IMR-90 (cell line): ENCODE measurements at regions of chr9 and their contacts with region 1.

Region 1: GRCh38 chr9:19799784-19800183 is 10.9 kb upstream of the SLC24A2 start:
- DNase-seq: no peak
- ATAC-seq: no peak
- H3K4me3 ChIP-seq: no peak overlapping the region
- H3K27ac ChIP-seq: no peak overlapping the region
- H3K4me1 ChIP-seq: no peaks in the 10 kb centered on the region
- H3K27me3 ChIP-seq: no peaks in the 10 kb centered on the region
- CTCF ChIP-seq: no peak
- POLR2A ChIP-seq: no peak
- RAD21 ChIP-seq: no peak

Region 2: GRCh38 chr9:19840953-19841352 is 41.2 kb after region 1 on chr9:
- CTCF ChIA-PET with region 1: no interaction called
- POLR2A ChIA-PET with region 1: no interaction called
- dilution Hi-C with region 1: no loop called
- in situ Hi-C with region 1: no loop called
- intact Hi-C with region 1: loop called (anchors 5 kb)
- DNase-seq: no peak
- ATAC-seq: no peak
- H3K4me3 ChIP-seq: no peak overlapping the region
- H3K27ac ChIP-seq: no peak overlapping the region
- H3K4me1 ChIP-seq: no peaks in the 10 kb centered on the region
- H3K27me3 ChIP-seq: no peaks in the 10 kb centered on the region
- CTCF ChIP-seq: no peak
- POLR2A ChIP-seq: no peak
- RAD21 ChIP-seq: no peak

Region 3: GRCh38 chr9:20832775-20833174 is 1033.0 kb after region 1 on chr9:
- CTCF ChIA-PET with region 1: no interaction called
- POLR2A ChIA-PET with region 1: no interaction called
- dilution Hi-C with region 1: no loop called
- in situ Hi-C with region 1: no loop called
- intact Hi-C with region 1: no loop called
- DNase-seq: peak; percentile 49
- ATAC-seq: peak; percentile 56
- H3K4me3 ChIP-seq: no peak overlapping the region
- H3K27ac ChIP-seq: no peak overlapping the region
- H3K4me1 ChIP-seq: peaks cover 2% of the 10 kb centered on the region; the same call in 1 of the 2 replicates
- H3K27me3 ChIP-seq: no peaks in the 10 kb centered on the region
- CTCF ChIP-seq: no peak
- POLR2A ChIP-seq: no peak
- RAD21 ChIP-seq: no peak